Activated CD4-positive, alpha-beta T cell treated with anti-CD3 and anti-CD28 coated beads for 36 hours (primary cell): ENCODE measurements at regions of chr22 and their contacts with region 1.

Region 1: DNA sequence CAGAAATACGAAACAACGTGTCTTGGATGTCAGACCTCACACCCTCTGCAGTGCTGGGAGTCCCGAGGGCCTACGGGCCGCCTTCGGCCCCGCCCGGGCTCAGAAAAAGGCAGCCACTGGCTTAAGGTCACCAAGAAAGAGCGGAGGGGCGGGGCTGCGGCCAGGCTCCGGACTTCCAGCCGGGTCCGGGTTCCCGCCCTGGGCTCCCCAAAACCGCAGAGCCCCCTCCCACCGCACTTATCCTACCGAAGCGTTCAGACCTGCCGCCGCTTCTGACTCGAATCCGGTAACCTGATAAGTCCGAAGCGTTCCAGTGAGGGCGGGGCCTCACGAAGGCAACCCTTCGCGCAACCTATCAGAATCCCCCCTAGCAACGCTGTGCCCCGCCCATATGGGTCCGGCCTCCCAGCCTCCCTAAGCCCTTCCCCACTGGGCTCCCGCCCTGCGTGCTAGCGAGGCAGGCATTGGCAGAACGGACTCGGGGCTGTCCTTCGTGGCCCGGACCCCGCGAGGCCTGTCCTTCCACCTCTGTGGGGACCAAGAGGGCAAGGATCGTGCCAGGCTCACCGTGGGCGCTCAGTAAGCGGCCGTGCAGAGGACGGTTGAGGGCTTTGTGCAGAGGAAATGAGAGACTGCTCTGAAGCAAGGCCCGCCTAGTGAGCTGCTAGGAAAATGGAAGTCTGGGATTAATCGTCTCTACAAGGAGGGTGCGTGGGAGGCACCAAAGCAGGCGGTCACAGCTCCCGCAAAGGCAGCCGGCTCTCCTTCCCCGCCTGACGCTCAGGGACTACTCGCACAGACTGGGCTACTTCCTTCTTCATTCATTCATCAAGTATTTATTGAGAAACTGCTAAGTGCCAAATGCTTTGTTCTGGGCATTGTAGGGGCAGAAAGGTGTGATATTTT is at the start of gene NAGA:
- DNase-seq: peak; percentile 97
- ATAC-seq: peak; percentile 99
- H3K4me3 Mint-ChIP-seq: peak within 1 kb of the TSS; percentile 84
- H3K27ac Mint-ChIP-seq: peak within 1 kb of the TSS; percentile 89
- H3K4me1 Mint-ChIP-seq: peaks cover 28% of the 10 kb centered on the region
- H3K27me3 Mint-ChIP-seq: no peaks in the 10 kb centered on the region
- total RNA-seq, gene NAGA: 19.7 to 20.0 TPM

Region 2: DNA sequence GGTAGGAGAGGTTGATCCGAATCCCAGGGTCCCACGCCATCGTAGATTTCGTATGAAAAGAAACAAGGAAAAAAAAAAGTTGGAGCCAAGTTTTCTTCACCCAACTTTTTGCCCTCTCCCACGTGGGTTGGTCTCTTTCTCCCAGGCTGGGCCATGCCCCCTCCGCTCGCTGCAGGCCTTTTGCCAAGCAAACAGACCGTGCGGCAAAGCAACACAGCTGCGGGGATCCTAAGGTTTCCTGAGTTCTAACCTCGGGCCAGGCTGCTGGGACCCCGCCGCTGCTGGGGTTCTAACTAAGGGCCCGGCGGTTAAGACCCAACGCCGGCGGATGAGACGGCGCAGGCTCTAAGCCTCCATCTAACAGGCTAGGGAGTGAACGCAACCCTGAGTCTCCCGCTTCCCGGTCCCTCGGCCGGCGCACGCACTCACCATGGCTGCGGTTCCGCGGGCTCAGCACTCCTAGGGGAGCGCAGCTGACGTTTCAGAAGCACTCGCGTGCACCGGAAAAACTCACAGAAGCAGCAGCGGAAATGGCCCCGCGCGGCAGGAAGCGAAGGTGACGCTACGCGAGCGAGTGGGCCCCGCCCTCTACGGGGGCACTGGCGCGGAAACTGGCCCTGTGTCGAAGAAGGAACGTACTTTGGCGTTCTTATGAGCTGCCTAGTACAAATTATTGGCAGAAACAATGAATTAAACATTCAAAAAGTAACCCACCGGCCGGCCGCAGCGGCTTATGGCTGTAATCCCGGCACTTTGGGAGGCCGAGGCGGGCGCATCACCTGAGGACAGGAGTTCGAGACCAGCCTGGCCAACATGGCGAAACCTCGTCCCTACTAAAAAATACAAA is 382.2 kb before region 1 on chr22 and contains the start of gene SNU13:
- CTCF ChIA-PET with region 1: no interaction called
- POLR2A ChIA-PET with region 1: no interaction called
- intact Hi-C with region 1: loop called in 1 of 2 experiments (anchors 2 kb)
- DNase-seq: peak; percentile 96
- ATAC-seq: peak; percentile 93
- H3K4me3 Mint-ChIP-seq: peak within 1 kb of the TSS; percentile 98
- H3K27ac Mint-ChIP-seq: peak within 1 kb of the TSS; percentile 98
- H3K4me1 Mint-ChIP-seq: peaks cover 34% of the 10 kb centered on the region
- H3K27me3 Mint-ChIP-seq: no peaks in the 10 kb centered on the region
- total RNA-seq, gene SNU13: 275 to 281 TPM

Region 3: DNA sequence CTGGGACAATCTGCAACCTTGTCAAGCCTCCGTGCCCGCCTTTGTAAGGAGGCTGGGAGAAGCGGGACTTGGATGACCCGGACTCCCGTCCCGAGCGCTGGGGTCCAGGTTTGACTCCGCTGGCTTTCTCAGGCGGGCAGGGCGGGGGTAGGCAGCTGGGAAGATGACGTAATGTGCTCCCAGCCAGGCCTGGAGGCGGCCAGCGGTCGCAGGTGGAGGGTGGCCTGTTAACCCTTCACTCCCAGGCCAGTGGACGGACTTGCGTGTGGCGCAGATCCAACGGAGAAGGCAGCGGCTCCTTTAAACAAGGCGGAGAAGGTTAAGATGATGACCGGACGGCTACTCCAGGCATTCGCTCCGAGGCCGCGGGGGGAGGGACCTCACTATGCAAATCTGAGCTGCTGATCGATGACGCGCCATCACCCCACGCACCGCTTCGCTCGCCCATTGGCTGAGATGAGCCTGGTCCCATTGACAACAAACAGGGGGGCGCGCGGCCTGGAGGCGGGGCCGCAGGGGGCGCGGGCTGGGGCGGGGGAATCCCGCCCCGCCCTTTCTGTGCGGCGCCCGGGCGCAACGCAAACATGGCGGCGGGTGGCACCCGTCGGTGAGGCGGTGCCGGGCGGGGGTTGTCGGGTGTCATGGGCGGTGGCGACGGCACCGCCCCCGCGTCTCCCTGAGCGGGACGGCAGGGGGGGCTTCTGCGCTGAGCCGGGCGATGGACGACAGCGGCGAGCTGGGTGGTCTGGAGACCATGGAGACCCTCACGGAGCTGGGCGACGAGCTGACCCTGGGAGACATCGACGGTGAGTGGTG is 238.0 kb before region 1 on chr22 and contains the start of gene SREBF2:
- CTCF ChIA-PET with region 1: no interaction called
- POLR2A ChIA-PET with region 1: no interaction called
- intact Hi-C with region 1: loop called (anchors 2 to 10 kb)
- DNase-seq: peak; percentile 100
- ATAC-seq: peak; percentile 94
- H3K4me3 Mint-ChIP-seq: peak within 1 kb of the TSS; percentile 96
- H3K27ac Mint-ChIP-seq: peak within 1 kb of the TSS; percentile 99
- H3K4me1 Mint-ChIP-seq: peaks cover 45% of the 10 kb centered on the region
- H3K27me3 Mint-ChIP-seq: no peaks in the 10 kb centered on the region
- total RNA-seq, gene SREBF2: 101 to 105 TPM

Region 4: GRCh38 chr22:41976401-41976901 is 94.3 kb before region 1 on chr22:
- CTCF ChIA-PET with region 1: interaction called, 4 read pairs
- POLR2A ChIA-PET with region 1: no interaction called
- intact Hi-C with region 1: loop called in 1 of 2 experiments (anchors 1 kb)
- DNase-seq: peak; percentile 69
- ATAC-seq: peak; percentile 70
- H3K4me3 Mint-ChIP-seq: peak overlapping the region; percentile 66
- H3K27ac Mint-ChIP-seq: peak overlapping the region; percentile 24
- H3K4me1 Mint-ChIP-seq: peaks cover 11% of the 10 kb centered on the region
- H3K27me3 Mint-ChIP-seq: peaks cover 39% of the 10 kb centered on the region

Region 5: GRCh38 chr22:42090596-42091454 is 20.1 kb after region 1 on chr22 and contains the start of gene NDUFA6:
- CTCF ChIA-PET with region 1: interaction called, 4 read pairs
- POLR2A ChIA-PET with region 1: interaction called, 12 read pairs
- intact Hi-C with region 1: loop called in 1 of 2 experiments (anchors 1 kb)
- DNase-seq: peak; percentile 99
- ATAC-seq: peak; percentile 97
- H3K4me3 Mint-ChIP-seq: peak within 1 kb of the TSS; percentile 96
- H3K27ac Mint-ChIP-seq: peak within 1 kb of the TSS; percentile 99
- H3K4me1 Mint-ChIP-seq: peaks cover 30% of the 10 kb centered on the region
- H3K27me3 Mint-ChIP-seq: no peaks in the 10 kb centered on the region
- total RNA-seq, gene NDUFA6: 123 to 144 TPM

Region 6: DNA sequence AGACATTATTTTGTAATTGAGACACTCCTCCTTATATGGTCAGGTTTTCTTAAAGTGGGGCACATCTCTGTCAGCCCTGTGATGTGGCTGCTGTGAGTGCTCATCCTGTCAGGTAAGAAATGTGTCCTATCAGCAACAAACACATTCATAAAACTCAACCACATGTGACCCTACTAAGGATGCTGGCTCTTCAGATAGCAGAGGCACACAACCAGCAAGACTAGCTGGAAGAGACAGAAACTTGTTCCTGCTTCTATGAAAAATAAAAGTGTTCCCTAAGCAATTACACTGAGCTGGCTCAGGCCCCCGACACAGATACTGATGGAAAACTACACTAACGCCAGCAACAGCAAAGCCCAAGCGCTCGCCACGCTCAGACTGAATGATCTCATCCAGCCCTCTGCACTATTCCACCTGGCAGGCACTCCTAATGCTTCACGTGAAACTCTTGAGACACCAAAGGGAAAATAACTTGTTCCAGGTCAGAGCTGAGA is 109.6 kb after region 1 on chr22:
- CTCF ChIA-PET with region 1: no interaction called
- POLR2A ChIA-PET with region 1: no interaction called
- intact Hi-C with region 1: no loop called
- DNase-seq: peak; percentile 72
- ATAC-seq: peak; percentile 80
- H3K4me3 Mint-ChIP-seq: peak overlapping the region; percentile 42
- H3K27ac Mint-ChIP-seq: peak overlapping the region; percentile 80
- H3K4me1 Mint-ChIP-seq: peaks cover 90% of the 10 kb centered on the region
- H3K27me3 Mint-ChIP-seq: no peaks in the 10 kb centered on the region

Region 7: GRCh38 chr22:42261296-42261695 is 190.5 kb after region 1 on chr22:
- CTCF ChIA-PET with region 1: no interaction called
- POLR2A ChIA-PET with region 1: no interaction called
- intact Hi-C with region 1: no loop called
- DNase-seq: no peak
- ATAC-seq: no peak
- H3K4me3 Mint-ChIP-seq: no peak overlapping the region
- H3K27ac Mint-ChIP-seq: no peak overlapping the region
- H3K4me1 Mint-ChIP-seq: peaks cover 96% of the 10 kb centered on the region
- H3K27me3 Mint-ChIP-seq: no peaks in the 10 kb centered on the region

Region 8: GRCh38 chr22:42357634-42358296 is 287.0 kb after region 1 on chr22:
- CTCF ChIA-PET with region 1: no interaction called
- POLR2A ChIA-PET with region 1: no interaction called
- intact Hi-C with region 1: no loop called
- DNase-seq: no peak
- ATAC-seq: no peak
- H3K4me3 Mint-ChIP-seq: no peak overlapping the region
- H3K27ac Mint-ChIP-seq: no peak overlapping the region
- H3K4me1 Mint-ChIP-seq: no peaks in the 10 kb centered on the region
- H3K27me3 Mint-ChIP-seq: peaks cover 9% of the 10 kb centered on the region

Region 9: DNA sequence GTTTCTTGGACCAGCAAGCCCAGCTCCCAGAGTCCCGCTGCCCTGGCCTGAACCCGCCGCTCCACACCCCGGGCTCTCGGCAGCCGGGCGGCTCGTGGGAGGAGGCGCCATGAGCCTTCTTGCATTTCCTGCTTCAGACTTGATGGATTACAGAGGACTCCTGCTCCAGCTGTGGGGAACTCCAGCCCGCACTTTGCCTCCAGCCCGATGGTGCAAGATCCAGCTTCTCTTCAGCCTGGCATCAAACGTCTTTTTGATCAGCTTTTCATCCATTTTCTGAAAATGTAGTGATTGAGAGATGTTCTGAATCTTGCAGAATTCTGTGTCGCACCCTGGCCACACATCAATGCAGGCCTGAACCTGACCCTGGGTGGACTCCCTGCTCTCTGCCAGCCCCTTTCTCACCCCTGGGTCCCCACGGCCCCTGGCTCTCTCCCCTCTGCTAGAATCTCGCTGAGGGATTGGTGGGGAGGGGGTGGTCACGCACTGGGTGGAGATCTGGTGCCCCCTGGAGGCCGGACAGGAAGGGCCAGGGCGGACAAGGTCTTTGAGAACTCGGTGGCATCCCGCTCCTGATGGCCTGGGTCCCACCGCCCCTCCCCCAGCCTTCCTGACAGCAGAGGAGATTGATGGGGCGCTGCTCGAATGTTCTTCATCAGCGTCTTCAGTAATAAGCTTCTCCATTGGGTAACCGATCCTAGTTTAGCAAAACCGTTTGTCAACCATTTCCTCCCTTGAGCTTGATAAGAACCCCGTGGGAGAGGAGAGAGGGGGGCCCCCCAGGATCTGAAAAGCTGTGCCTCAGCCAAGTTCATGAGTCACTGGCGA is 373.5 kb after region 1 on chr22:
- CTCF ChIA-PET with region 1: interaction called, 3 read pairs
- POLR2A ChIA-PET with region 1: interaction called, 7 read pairs
- intact Hi-C with region 1: loop called in 1 of 2 experiments (anchors 5 kb)
- DNase-seq: peak; percentile 88
- ATAC-seq: peak; percentile 69
- H3K4me3 Mint-ChIP-seq: peak overlapping the region; percentile 68
- H3K27ac Mint-ChIP-seq: peak overlapping the region; percentile 78
- H3K4me1 Mint-ChIP-seq: peaks cover 32% of the 10 kb centered on the region
- H3K27me3 Mint-ChIP-seq: no peaks in the 10 kb centered on the region